ENCODE measurements at regions of chr10 and their contacts with region 1.

Region 1: DNA sequence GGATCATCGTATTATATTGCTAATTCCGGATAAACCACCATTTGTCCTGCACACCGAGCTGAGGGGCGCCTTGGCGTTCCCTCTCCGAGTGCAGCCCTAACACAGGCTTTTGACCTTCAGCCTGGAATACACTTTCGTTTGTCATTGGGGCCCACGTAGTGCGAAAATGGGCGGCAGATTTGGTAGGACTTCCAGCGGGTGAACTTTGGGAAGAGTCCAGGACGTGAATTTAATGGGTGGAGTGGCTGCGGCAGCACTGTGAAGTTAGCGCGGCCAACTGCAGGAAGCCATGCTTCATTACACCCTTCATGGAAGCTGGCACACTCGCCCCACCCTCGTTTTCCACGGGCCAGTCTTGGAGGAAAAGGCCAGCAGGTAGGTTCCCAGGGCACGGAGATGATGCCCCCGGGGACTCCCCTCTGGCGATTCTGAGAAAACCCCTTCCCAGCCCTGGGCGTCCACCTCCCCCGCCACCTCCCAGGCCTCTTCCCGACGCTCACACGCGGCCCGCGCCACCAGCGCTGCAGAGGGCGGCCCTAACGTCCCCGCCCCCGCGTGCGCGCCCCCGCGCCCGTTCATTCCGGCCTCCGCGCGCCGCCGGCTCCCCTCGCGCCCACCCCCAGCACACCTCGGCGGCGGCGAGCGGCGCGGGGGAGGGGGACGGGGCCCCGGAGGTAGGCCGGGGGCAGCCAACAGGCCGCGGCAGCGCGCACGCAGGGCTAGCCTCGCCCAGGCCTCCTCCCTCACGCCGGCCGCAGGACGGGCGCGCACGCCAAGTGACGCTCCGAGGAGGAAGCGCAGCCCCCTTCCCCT is at the start of gene MLLT10:
- DNase-seq: peak; percentile 94
- ATAC-seq: peak; percentile 85
- H3K4me3 ChIP-seq: peak within 1 kb of the TSS; percentile 76 to 84 (median 81)
- H3K27ac ChIP-seq: peak within 1 kb of the TSS; percentile 97
- H3K4me1 ChIP-seq: peaks cover 38% of the 10 kb centered on the region
- H3K27me3 ChIP-seq: no peaks in the 10 kb centered on the region; a peak in 1 of 5 replicates
- CTCF ChIP-seq: peak; percentile 33
- EP300 ChIP-seq: peak; percentile 17 to 60; a peak in 1 of 4 replicates
- POLR2A ChIP-seq: peak in 1 of 2 experiments; percentile 91; a peak in 2 of 4 replicates
- RAD21 ChIP-seq: peak; percentile 69; the same call in 1 of the 2 replicates
- total RNA-seq, gene MLLT10: 39.3 and 51.3 TPM in 2 replicates

Region 2: DNA sequence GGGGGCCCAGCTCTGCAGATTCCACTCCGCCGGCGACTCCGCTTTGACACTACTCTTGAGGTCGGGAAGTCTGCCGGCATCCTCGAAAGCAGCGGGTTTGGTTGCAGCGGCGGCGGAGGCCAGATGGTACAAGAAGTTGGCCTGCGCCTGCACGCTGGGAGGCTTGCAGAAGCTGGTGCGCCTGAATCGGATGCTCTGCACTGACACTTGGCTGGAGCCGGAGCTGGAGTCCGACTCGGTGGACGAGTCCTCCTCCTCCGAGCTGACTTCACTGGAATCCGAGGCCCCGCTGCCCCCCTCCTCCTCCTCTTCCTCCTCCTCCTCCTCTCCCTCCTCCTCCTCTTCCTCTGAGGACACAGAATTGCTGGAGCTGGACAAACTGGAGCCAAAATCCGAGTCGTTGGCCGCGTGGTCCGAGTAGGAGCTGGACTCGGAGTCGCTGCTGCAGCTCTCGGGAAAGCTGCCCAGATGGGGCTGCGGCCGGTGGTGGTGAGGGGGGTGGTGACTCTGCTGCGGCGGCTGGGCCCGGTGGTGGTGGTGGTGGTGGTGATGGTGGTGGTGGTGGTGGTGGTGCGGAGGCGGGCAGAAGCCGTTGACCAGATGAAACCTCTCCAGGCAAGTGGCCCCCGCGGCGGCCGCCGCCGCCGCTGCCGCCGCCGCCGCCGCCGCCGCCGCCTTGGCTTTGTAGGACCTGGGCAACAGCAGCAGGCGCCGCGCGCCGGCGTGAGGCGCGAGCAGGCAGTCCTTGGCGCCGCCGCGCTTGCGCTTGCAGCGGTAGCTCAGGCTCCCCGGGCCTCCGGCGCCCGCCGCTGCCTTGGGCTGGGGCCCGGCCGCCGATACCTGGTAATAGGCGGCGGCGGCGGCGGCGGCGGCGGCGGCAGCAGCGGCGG is 17.2 kb before region 1 on chr10:
- CTCF ChIA-PET with region 1: no interaction called
- POLR2A ChIA-PET with region 1: interaction called, 92 read pairs
- in situ Hi-C with region 1: no loop called
- intact Hi-C with region 1: loop called (anchors 2 kb)
- DNase-seq: no peak
- ATAC-seq: peak; percentile 77
- H3K4me3 ChIP-seq: peak overlapping the region; percentile 77 to 91 (median 80)
- H3K27ac ChIP-seq: peak overlapping the region; percentile 41
- H3K4me1 ChIP-seq: peaks cover 71% of the 10 kb centered on the region
- H3K27me3 ChIP-seq: no peaks in the 10 kb centered on the region; a peak in 1 of 5 replicates
- CTCF ChIP-seq: no peak
- EP300 ChIP-seq: no peak
- POLR2A ChIP-seq: no peak
- RAD21 ChIP-seq: peak; percentile 5